ENCODE measurements at regions of chr12 and their contacts with region 1.

Region 1: DNA sequence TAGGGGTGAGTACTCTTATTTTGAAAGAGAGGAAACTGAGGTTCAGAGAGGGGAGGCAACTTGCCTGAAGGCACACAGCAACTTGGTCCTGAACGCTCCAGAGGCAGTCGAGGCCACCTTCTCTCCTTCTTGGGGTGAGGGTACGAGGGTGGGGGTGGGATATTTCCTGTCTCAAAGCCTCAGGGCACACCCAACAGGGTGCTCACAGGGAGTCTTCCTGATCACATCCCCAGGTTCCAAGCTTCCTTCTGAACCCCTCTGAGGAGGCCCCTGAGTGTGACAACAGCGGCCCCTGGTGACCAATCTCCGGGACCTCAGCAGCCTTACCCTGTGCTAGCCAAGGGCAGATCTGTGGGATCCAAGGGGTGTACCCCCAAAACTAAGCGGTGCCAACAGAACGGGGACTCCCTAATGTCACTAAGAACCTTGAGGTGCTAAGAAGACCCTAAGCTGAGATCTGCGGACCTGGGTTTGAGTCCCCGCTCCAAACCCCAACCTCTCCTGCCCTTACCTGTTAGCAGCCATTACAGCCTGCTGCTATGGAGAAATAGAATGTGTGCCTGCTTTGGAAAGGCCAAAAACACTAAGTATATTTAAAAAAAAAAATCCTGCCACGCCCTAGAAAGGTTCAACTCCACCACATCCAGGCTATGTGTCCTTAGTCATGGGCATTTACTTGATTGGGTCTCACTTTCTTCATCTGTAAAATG is 57.9 kb downstream of the TRPV4 start:
- DNase-seq: peak; percentile 63 to 81
- ATAC-seq: peak; percentile 74 to 91 (median 86)
- H3K4me3 ChIP-seq: no peak overlapping the region
- H3K4me3 Mint-ChIP-seq: no peak overlapping the region
- H3K27ac ChIP-seq: no peak overlapping the region
- H3K27ac Mint-ChIP-seq: no peak overlapping the region
- H3K4me1 ChIP-seq: no peaks in the 10 kb centered on the region
- H3K4me1 Mint-ChIP-seq: peaks cover 5 to 10% of the 10 kb centered on the region in 2 donors
- H3K27me3 ChIP-seq: no peaks in the 10 kb centered on the region
- H3K27me3 Mint-ChIP-seq: peaks cover 0 to 4% of the 10 kb centered on the region in 2 donors
- CTCF ChIP-seq: peak; percentile 86

Region 2: GRCh38 chr12:109597795-109598427 is 177.4 kb before region 1 on chr12:
- intact Hi-C with region 1: loop called (anchors 1 kb)
- DNase-seq: peak; percentile 51 to 72
- ATAC-seq: peak; percentile 64 to 80 (median 68)
- H3K4me3 ChIP-seq: no peak overlapping the region
- H3K4me3 Mint-ChIP-seq: no peak overlapping the region
- H3K27ac ChIP-seq: no peak overlapping the region
- H3K27ac Mint-ChIP-seq: no peak overlapping the region
- H3K4me1 ChIP-seq: peaks cover 21% of the 10 kb centered on the region
- H3K4me1 Mint-ChIP-seq: peaks cover 8 to 16% of the 10 kb centered on the region in 2 donors
- H3K27me3 ChIP-seq: no peaks in the 10 kb centered on the region
- H3K27me3 Mint-ChIP-seq: no peaks in the 10 kb centered on the region
- CTCF ChIP-seq: peak; percentile 88

Region 3: GRCh38 chr12:109797905-109798669 is 22.8 kb after region 1 on chr12:
- intact Hi-C with region 1: no loop called
- DNase-seq: no peak
- ATAC-seq: no peak
- H3K4me3 ChIP-seq: no peak overlapping the region
- H3K4me3 Mint-ChIP-seq: no peak overlapping the region
- H3K27ac ChIP-seq: no peak overlapping the region
- H3K27ac Mint-ChIP-seq: no peak overlapping the region
- H3K4me1 ChIP-seq: no peaks in the 10 kb centered on the region
- H3K4me1 Mint-ChIP-seq: no peaks in the 10 kb centered on the region
- H3K27me3 ChIP-seq: no peaks in the 10 kb centered on the region
- H3K27me3 Mint-ChIP-seq: peaks cover 0 to 5% of the 10 kb centered on the region in 2 donors
- CTCF ChIP-seq: no peak

Measured in natural killer cell (primary cell).